ENCODE measurements at regions of chr11 and their contacts with region 1.

Region 1: DNA sequence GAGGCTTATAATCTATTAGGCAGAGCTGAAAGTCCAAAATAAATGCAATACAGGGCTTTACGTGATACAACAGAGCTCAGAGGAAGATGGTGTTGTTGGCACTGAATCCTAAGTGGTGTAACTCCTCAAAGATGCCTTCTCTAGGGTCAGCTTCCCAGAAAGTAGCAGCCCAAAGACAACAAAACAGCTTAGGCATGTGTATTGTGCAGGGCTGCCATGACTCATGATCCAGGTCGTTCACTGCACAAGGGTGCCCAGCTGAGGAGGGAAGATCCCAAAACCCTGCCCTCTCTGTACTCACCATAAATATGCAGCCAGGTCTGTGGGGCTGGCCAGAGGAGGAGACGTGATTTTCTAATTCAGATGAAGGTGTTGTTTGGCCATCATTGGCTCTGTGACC is 59.4 kb upstream of the NNMT start:
- DNase-seq: no peak
- H3K4me3 Mint-ChIP-seq: no peak overlapping the region
- H3K27ac Mint-ChIP-seq: no peak overlapping the region
- H3K4me1 Mint-ChIP-seq: no peaks in the 10 kb centered on the region
- H3K27me3 Mint-ChIP-seq: peaks cover 40% of the 10 kb centered on the region

Region 2: DNA sequence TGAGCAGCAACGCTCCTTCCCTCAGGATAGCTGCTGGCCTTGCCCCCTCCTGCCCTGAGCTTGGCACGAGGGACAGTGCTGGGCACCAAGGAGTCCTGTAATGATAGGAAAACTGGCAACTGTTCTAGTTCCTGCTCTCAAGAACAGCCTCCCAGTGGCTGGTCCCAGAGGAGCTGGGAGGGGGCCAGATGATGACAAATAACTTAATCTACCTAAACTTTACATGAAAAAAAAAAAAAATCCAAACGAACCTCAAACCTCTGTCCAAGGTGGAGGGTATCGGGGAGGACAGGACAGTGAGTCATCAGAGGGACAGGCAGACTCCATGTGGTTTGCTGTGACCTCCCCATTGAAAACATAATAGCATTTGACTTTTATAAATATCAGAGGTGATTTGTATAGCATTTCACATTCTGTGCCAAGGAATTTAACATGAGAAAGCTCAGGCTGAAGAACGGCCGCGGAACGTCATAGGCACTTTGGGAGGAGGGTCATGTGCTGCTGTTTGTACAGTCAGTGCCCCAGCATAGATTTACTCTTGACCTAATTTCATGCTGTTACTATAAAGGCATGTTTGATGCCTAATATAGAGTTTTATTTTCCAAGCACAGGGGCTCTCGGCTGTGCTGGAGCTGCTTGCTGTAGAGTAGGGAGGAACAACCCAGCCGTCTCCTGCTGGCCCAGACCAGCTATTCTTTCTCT is 38.9 kb before region 1 on chr11:
- CTCF ChIA-PET with region 1: no interaction called
- POLR2A ChIA-PET with region 1: no interaction called
- DNase-seq: no peak
- H3K4me3 Mint-ChIP-seq: no peak overlapping the region
- H3K27ac Mint-ChIP-seq: no peak overlapping the region
- H3K4me1 Mint-ChIP-seq: peaks cover 32% of the 10 kb centered on the region
- H3K27me3 Mint-ChIP-seq: no peaks in the 10 kb centered on the region

Region 3: GRCh38 chr11:114250993-114251814 is 14.4 kb after region 1 on chr11:
- CTCF ChIA-PET with region 1: interaction called, 14 read pairs
- POLR2A ChIA-PET with region 1: no interaction called
- DNase-seq: no peak
- H3K4me3 Mint-ChIP-seq: no peak overlapping the region
- H3K27ac Mint-ChIP-seq: no peak overlapping the region
- H3K4me1 Mint-ChIP-seq: no peaks in the 10 kb centered on the region
- H3K27me3 Mint-ChIP-seq: no peaks in the 10 kb centered on the region